Posterior vena cava (tissue), 2 donors: ENCODE measurements at regions of chrX and their contacts with region 1.

Region 1: DNA sequence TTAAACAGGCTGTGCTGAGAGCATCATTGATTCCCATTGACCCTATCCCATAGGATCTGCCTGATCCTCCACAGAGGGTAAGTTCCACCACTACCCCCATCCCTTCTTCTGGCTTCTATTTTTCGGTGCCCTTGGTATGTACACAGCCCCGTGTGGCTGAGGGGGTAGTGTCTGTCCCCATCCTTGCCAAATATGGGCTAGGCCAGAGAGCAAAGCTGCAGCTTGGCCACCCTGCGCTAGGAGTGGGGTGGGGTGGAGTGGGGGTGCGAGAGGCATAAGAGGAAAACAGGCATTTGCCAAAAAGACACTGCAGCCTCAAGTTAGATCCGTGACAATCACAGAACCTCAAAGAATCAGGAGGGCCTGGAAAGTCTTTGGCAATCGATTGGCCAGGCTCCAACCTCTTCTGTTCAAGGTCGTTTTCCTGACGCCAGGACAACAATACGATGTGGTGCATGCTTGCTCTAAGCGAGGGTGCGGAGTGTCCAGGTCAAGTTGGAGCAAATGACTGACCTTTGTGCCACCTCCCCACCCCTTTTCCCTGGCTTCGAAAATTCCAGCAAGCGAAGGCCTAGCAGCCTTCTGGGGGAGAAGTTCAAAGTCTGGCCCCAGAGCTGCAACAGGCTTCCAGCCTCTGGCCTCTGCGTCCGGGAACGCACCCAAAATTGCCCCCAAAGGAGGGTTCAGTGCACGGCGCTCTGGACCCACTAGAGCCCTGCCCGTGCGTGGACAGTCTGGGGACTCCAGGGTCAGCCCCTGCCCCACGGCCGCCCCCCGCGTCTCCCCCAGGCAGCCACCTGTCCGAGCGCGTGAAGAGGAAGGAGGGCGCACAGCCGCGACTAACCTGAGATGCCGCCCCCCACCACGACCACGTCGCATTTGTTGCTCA is 596 bp downstream of the MAOB start:
- DNase-seq: no peak

Region 2: DNA sequence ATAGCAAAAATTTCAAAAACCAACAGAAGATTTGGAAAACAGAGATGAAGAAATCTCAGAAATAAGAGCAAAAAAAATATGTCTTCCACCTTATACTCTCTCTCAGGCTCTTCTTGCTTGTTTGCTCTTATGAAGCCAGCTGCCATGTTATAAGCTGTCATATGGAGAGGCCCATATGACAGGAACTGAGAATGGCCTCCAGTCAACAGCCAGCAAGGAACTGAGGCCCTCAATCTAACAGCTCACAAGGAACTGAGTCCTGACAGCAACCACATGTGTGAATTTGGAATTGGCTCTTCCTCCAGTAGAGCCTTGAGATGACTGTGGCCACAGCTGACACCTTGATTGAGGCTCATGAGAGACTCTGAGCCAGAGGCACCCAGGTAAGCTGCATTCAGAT is 276.9 kb before region 1 on chrX:
- intact Hi-C with region 1: no loop called
- DNase-seq: no peak

Region 3: DNA sequence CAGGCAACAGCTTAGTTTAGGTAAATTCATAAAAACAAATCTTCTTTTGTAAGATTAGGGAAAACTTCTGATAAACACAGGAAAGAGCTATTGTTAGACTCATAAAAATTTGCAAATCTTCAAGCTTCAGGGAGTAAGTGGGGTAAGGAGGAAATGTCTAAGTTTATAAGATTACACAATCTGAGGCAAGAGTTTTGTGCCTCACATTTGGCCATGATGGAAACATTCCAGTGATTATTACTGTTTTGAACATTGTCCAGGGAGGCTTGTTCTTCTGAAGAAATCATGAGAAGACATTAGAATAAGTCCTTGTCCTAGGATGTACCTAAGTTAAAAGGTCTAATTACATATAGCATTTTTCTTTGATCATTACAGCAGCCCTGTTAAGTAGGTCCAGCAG is 72.2 kb before region 1 on chrX:
- intact Hi-C with region 1: no loop called
- DNase-seq: no peak

Region 4: DNA sequence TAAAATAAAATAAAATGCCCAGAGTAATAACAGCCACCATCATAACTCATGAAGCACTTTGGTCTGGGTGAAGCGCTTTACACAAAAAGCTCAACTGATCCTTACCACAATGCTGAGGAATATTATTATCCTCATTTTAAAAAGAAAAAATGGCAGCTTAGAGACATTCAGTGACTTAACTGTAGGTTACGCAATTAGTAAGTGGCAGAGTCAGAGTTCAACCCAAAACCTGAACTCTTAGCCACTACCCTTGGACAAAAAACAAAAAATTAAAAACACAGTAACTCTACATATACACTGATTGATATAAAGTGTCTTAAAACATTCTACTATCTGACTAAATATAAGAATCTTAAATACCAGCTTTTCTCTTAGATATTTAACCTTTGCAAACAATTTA is 34.3 kb before region 1 on chrX:
- intact Hi-C with region 1: loop called in 1 of 2 experiments (anchors 1 kb)
- DNase-seq: no peak